ENCODE measurements at regions of chr20 and their contacts with region 1.

Region 1: GRCh38 chr20:34876162-34877001 is at the start of gene ACSS2:
- DNase-seq: peak; percentile 99
- H3K4me3 ChIP-seq: peak within 1 kb of the TSS; percentile 68 to 98 (median 76)
- H3K27ac ChIP-seq: no peak within 1 kb of the TSS
- H3K4me1 ChIP-seq: peaks cover 0 to 10% (median 4%) of the 10 kb centered on the region in 4 experiments; a peak in 4 of 7 replicates
- H3K27me3 ChIP-seq: peaks cover 0 to 17% (median 13%) of the 10 kb centered on the region in 4 experiments; a peak in 6 of 7 replicates
- CTCF ChIP-seq: no peak
- EP300 ChIP-seq: no peak
- POLR2A ChIP-seq: no peak
- RAD21 ChIP-seq: no peak
- total RNA-seq, gene ACSS2: 17.7 and 19.9 TPM in 2 replicates

Region 2: DNA sequence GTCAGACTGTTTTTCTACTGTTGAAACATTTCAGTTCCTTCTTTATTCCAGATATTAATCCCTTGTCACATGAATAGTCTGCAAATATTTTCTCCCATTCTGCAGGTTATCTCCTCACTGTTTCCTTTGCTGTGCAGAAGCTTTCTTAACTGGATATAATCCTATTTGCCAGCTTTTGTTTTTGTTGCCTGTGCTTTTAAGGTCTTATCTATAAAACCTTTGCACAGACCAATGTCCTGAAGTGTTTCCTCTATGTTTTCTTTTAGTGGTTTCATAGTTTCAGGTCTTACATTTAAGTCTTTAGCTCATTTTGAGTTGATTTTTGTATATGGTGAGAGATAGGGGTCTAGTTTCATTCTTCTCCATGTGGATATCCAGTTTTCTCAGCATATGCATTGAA is 70.1 kb before region 1 on chr20:
- CTCF ChIA-PET with region 1: no interaction called
- POLR2A ChIA-PET with region 1: no interaction called
- DNase-seq: no peak
- H3K4me3 ChIP-seq: no peak overlapping the region
- H3K27ac ChIP-seq: no peak overlapping the region
- H3K4me1 ChIP-seq: no peaks in the 10 kb centered on the region
- H3K27me3 ChIP-seq: no peaks in the 10 kb centered on the region
- CTCF ChIP-seq: no peak
- EP300 ChIP-seq: no peak
- POLR2A ChIP-seq: no peak
- RAD21 ChIP-seq: no peak

Region 3: DNA sequence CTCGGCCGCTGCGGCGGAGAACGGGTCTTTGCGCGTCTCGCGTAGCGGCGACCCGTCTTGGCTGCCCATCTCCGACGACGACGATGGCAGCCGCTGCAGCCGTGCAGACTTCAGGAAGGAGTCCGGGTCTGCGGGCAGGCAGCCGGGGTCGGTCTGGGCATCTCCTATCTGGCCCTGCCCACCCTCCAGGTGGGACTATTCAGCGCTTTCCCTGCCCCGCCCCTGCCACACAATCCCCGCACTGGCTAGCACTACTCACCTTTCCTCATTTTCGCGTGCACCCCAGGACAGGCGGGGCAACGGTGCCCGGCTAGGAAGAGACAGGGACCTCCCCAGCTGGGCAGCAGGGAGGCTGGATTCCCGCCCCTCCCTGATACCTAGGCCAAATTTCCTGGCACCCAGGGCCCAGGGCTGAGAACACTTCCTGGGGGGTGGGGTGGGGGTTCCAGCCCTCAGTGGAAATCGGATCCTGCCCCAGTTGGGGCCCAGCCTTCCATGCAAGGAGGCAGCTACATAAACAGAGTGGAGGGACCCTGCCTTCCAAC is 12.9 kb before region 1 on chr20:
- CTCF ChIA-PET with region 1: interaction called, 15 read pairs
- POLR2A ChIA-PET with region 1: interaction called, 3 read pairs
- DNase-seq: peak in 1 of 2 experiments; percentile 65
- H3K4me3 ChIP-seq: peak overlapping the region in 3 of 4 experiments; percentile 45 to 54 (median 49); a peak in 6 of 8 replicates
- H3K27ac ChIP-seq: no peak overlapping the region
- H3K4me1 ChIP-seq: peaks cover 5 to 15% (median 7%) of the 10 kb centered on the region in 4 experiments; a peak in 6 of 7 replicates
- H3K27me3 ChIP-seq: no peaks in the 10 kb centered on the region; a peak in 1 of 7 replicates
- CTCF ChIP-seq: no peak
- EP300 ChIP-seq: no peak
- POLR2A ChIP-seq: no peak
- RAD21 ChIP-seq: no peak

Region 4: DNA sequence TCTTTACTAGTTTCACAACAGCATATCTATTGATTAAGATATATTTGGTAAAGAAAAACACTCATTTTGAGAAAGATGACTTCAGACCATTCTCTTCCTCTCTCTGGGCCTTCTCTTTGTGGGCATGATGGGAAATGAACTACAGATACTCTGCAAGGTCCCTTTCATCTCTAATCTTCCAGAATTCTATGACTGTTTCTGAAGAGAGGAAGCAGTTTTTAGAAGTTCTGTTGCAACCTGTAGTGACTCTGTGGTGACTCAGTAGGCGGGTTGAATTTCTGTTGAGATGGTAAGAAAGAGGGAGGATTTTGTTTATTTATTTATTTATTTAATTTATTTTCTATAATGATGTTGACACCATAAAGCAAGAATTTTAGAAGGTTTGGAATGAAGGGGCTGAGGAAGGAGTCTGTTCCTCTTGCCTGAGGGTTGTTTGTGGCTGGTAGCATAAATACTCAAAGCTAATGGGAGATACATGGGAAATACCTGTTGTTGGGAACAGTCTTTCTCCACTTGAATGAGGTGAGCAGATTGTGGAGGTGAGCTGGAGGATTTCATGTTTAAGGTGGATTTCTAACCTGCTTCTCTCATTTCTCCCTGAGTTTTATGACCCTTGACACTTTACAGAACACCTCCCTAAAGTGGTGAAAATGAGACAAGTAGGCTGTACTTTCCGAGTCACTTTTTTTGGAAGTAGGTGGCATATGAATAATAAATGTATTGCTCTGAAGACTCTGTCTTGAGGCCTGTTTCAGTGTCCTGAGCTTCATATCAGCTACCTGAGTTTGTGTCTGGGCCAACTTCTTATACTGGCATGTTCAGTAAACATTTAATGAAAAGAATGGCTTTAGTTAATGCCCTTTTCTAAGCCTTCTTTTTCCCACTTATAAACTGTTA is 15.0 kb after region 1 on chr20:
- CTCF ChIA-PET with region 1: interaction called, 13 read pairs
- POLR2A ChIA-PET with region 1: interaction called, 3 read pairs
- DNase-seq: no peak
- H3K4me3 ChIP-seq: no peak overlapping the region
- H3K27ac ChIP-seq: no peak overlapping the region
- H3K4me1 ChIP-seq: no peaks in the 10 kb centered on the region
- H3K27me3 ChIP-seq: no peaks in the 10 kb centered on the region
- CTCF ChIP-seq: no peak
- EP300 ChIP-seq: no peak
- POLR2A ChIP-seq: no peak
- RAD21 ChIP-seq: no peak

Region 5: GRCh38 chr20:34955232-34956040 is 79.1 kb after region 1 on chr20 and contains the starts of genes GSS and MYH7B:
- CTCF ChIA-PET with region 1: interaction called, 48 read pairs
- POLR2A ChIA-PET with region 1: interaction called, 8 read pairs
- DNase-seq: peak; percentile 96 to 100
- H3K4me3 ChIP-seq: peak within 1 kb of the TSS; percentile 64 to 91 (median 74)
- H3K27ac ChIP-seq: peak within 1 kb of the TSS; percentile 35; the same call in 1 of the 2 replicates
- H3K4me1 ChIP-seq: peaks cover 0 to 12% (median under 1%) of the 10 kb centered on the region in 4 experiments; a peak in 3 of 7 replicates
- H3K27me3 ChIP-seq: peaks cover 0 to 5% (median 1%) of the 10 kb centered on the region in 4 experiments; a peak in 3 of 7 replicates
- CTCF ChIP-seq: peak; percentile 46 to 59 (median 55); a peak in 3 of 4 replicates
- EP300 ChIP-seq: 0 out of 3 replicates have a peak, but pooled peaks of 1 of the 2 experiments have one; percentile 5
- POLR2A ChIP-seq: peak; percentile 56 to 70; a peak in 2 of 3 replicates
- RAD21 ChIP-seq: peak; percentile 60 to 63
- total RNA-seq, gene GSS: 29.4 and 34.6 TPM in 2 replicates
- total RNA-seq, gene MYH7B: 0.30 and 0.69 TPM in 2 replicates

Region 6: GRCh38 chr20:34970193-34970840 is 93.9 kb after region 1 on chr20:
- CTCF ChIA-PET with region 1: interaction called, 20 read pairs
- POLR2A ChIA-PET with region 1: no interaction called
- DNase-seq: no peak
- H3K4me3 ChIP-seq: no peak overlapping the region
- H3K27ac ChIP-seq: no peak overlapping the region
- H3K4me1 ChIP-seq: no peaks in the 10 kb centered on the region; a peak in 3 of 7 replicates
- H3K27me3 ChIP-seq: no peaks in the 10 kb centered on the region
- CTCF ChIP-seq: no peak
- EP300 ChIP-seq: no peak
- POLR2A ChIP-seq: no peak
- RAD21 ChIP-seq: no peak

Region 7: GRCh38 chr20:35001596-35002362 is 125.4 kb after region 1 on chr20:
- CTCF ChIA-PET with region 1: interaction called, 64 read pairs
- POLR2A ChIA-PET with region 1: interaction called, 3 read pairs
- DNase-seq: no peak
- H3K4me3 ChIP-seq: no peak overlapping the region
- H3K27ac ChIP-seq: no peak overlapping the region
- H3K4me1 ChIP-seq: peaks cover 0 to 2% (median 0%) of the 10 kb centered on the region in 4 experiments; a peak in 2 of 7 replicates
- H3K27me3 ChIP-seq: no peaks in the 10 kb centered on the region
- CTCF ChIP-seq: peak; percentile 48 to 57 (median 49)
- EP300 ChIP-seq: no peak
- POLR2A ChIP-seq: no peak
- RAD21 ChIP-seq: peak; percentile 54 to 61